Mammary epithelial cell (primary cell): ENCODE measurements at regions of chr12 and their contacts with region 1.

Region 1: GRCh38 chr12:121334513-121335343 is 17.5 kb downstream of the ANAPC5 start:
- DNase-seq: peak; percentile 56
- H3K4me3 ChIP-seq: no peak overlapping the region
- H3K27ac ChIP-seq: peak overlapping the region; percentile 12
- H3K4me1 ChIP-seq: peaks cover 6% of the 10 kb centered on the region
- H3K27me3 ChIP-seq: no peaks in the 10 kb centered on the region
- CTCF ChIP-seq: peak; percentile 83

Region 2: GRCh38 chr12:121399391-121400331 is 64.9 kb after region 1 on chr12 and contains the start of gene RNF34:
- CTCF ChIA-PET with region 1: no interaction called
- dilution Hi-C with region 1: no loop called
- in situ Hi-C with region 1: no loop called
- intact Hi-C with region 1: loop called (anchors 1 kb)
- DNase-seq: peak; percentile 99
- H3K4me3 ChIP-seq: peak within 1 kb of the TSS; percentile 71 to 86 (median 83)
- H3K27ac ChIP-seq: peak within 1 kb of the TSS; percentile 77
- H3K4me1 ChIP-seq: peaks cover 10% of the 10 kb centered on the region
- H3K27me3 ChIP-seq: no peaks in the 10 kb centered on the region
- CTCF ChIP-seq: no peak
- total RNA-seq, gene RNF34: 49.5 to 56.8 TPM

Region 3: DNA sequence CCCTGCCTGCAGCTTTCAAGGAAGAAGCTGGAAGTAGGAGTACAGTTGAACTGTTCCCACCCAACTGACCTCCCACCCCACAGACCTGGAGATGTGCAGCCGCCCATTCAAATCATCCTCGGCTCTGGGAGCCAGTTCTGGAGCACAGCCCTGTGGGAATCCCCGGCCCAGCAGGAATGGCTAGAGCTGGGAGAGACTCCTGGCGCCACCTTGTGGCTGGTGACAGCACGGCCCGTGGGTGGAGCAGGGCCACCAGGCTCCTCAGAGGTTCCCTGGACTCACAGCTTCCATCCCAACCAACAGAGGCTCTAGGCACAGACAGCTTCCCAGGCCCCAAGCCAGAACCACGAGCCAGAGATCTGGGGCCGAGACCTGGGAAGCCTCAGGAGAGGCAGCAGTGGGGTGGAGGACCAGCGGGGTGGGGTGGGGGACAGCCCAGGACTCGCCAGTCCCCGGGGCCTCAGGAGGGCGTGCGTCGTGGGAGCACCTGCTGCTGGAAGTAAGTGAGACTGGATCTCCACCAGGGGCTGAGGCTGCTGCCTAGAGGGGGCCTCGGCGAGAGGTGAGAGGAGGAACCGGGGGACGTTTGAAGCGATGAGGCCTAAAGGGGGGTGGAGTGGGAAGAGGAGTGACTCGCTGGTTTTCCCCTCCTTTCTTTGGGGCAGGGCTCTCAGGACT is 108.6 kb after region 1 on chr12:
- CTCF ChIA-PET with region 1: interaction called, 9 read pairs
- dilution Hi-C with region 1: no loop called
- in situ Hi-C with region 1: loop called (anchors 10 to 25 kb)
- intact Hi-C with region 1: loop called (anchors 1 kb)
- DNase-seq: peak; percentile 68
- H3K4me3 ChIP-seq: no peak overlapping the region
- H3K27ac ChIP-seq: no peak overlapping the region
- H3K4me1 ChIP-seq: no peaks in the 10 kb centered on the region
- H3K27me3 ChIP-seq: no peaks in the 10 kb centered on the region
- CTCF ChIP-seq: peak; percentile 88 to 96

Region 4: DNA sequence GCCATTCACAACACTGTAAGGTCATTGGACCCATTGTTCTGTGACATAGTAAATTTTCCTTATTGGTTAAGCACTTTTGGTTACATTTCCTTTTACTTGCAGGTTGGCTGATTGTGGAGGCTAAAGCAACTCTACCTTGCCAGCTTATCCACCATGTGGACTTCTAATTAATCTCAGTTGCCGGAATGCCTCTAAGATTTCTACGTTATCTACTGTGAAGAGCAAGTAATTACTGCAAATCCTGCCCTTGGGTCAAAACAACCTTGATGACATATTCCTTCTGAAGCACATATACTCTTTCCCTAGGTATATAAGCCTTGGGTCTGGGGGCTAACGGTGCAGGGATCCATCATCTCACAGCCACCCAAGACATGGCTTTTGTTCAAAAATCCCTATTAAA is 354.2 kb after region 1 on chr12:
- CTCF ChIA-PET with region 1: interaction called, 5 read pairs
- dilution Hi-C with region 1: no loop called
- in situ Hi-C with region 1: no loop called
- intact Hi-C with region 1: loop called (anchors 10 kb)
- DNase-seq: no peak
- H3K4me3 ChIP-seq: no peak overlapping the region
- H3K27ac ChIP-seq: no peak overlapping the region
- H3K4me1 ChIP-seq: no peaks in the 10 kb centered on the region
- H3K27me3 ChIP-seq: no peaks in the 10 kb centered on the region
- CTCF ChIP-seq: no peak